ENCODE measurements at regions of chr6 and their contacts with region 1.

Region 1: DNA sequence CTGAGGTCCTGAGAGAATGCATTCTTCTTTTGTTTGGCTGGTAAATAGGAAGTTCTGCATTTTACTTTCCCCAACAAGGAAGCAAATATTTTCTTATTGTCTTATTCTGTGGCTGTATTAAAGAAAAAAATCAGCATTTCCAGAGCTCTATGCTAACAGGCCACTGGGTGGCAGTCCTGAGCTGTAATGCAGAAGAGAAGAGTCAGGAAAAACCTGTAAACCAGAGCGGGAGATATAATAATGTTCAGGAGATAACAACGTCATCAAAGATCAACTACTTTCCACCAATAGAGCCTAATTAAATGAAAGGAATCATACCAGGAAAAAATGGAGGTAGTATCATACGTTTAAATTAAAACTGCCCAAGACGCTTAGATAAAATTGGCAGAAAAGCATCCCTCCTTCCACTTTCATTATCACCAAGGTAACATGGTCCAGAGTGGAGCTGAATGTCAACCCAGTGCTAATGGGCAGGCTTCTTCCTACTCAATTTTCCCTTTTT is 55.6 kb upstream of the CARMIL1 start:
- DNase-seq: peak; percentile 72
- H3K4me3 Mint-ChIP-seq: peak overlapping the region; percentile 58
- H3K27ac Mint-ChIP-seq: no peak overlapping the region
- H3K4me1 Mint-ChIP-seq: peaks cover 12% of the 10 kb centered on the region
- H3K27me3 Mint-ChIP-seq: peaks cover 2% of the 10 kb centered on the region

Region 2: DNA sequence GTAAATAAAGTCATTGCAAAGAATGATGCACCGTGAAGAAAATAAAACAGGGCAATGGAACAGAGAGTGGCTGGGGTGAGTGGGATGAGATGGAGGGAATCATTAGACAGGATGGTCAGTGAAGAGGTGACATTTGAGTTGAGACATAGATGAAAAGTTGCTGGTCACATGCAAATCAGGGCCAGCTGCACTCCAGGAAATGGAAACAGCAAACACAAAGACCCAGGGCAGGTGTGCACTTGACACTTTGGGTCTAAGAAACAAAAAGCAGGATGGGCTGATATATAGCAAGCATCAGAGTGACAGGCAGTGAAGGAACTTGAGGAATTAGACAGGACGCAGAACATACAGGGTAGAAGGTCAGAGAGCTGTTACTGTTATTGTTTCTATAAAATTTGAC is 116.3 kb before region 1 on chr6:
- CTCF ChIA-PET with region 1: no interaction called
- POLR2A ChIA-PET with region 1: no interaction called
- intact Hi-C with region 1: no loop called
- DNase-seq: no peak
- H3K4me3 Mint-ChIP-seq: no peak overlapping the region
- H3K27ac Mint-ChIP-seq: no peak overlapping the region
- H3K4me1 Mint-ChIP-seq: peaks cover 3% of the 10 kb centered on the region
- H3K27me3 Mint-ChIP-seq: no peaks in the 10 kb centered on the region

Region 3: GRCh38 chr6:25601800-25602673 is 378.5 kb after region 1 on chr6:
- CTCF ChIA-PET with region 1: interaction called, 9 read pairs
- POLR2A ChIA-PET with region 1: no interaction called
- intact Hi-C with region 1: loop called (anchors 1 kb)
- DNase-seq: no peak
- H3K4me3 Mint-ChIP-seq: no peak overlapping the region
- H3K27ac Mint-ChIP-seq: no peak overlapping the region
- H3K4me1 Mint-ChIP-seq: no peaks in the 10 kb centered on the region
- H3K27me3 Mint-ChIP-seq: no peaks in the 10 kb centered on the region